Heart right ventricle (tissue), 16 donors: ENCODE measurements at regions of chr1 and their contacts with region 1.

Region 1: GRCh38 chr1:7495962-7496361 is 275.1 kb upstream of the VAMP3 start:
- DNase-seq: no peak
- ATAC-seq: no peak
- H3K4me3 ChIP-seq: no peak overlapping the region
- H3K27ac ChIP-seq: no peak overlapping the region
- H3K4me1 ChIP-seq: peaks cover 0 to 13% (median 7%) of the 10 kb centered on the region in 9 donors
- H3K27me3 ChIP-seq: peaks cover 0 to 3% (median 0%) of the 10 kb centered on the region in 7 donors
- CTCF ChIP-seq: no peak

Region 2: GRCh38 chr1:6307099-6307498 is 1188.9 kb before region 1 on chr1:
- intact Hi-C with region 1: loop called in 1 of 10 experiments (anchors 5 kb)
- DNase-seq: no peak
- ATAC-seq: peak in 1 of 8 donors; percentile 69
- H3K4me3 ChIP-seq: no peak overlapping the region
- H3K27ac ChIP-seq: no peak overlapping the region
- H3K4me1 ChIP-seq: peaks cover 0 to 5% (median 0%) of the 10 kb centered on the region in 9 donors
- H3K27me3 ChIP-seq: no peaks in the 10 kb centered on the region
- CTCF ChIP-seq: no peak

Region 3: GRCh38 chr1:7060745-7061144 is 435.2 kb before region 1 on chr1:
- intact Hi-C with region 1: loop called in 1 of 10 experiments (anchors 5 kb)
- DNase-seq: no peak
- ATAC-seq: no peak
- H3K4me3 ChIP-seq: no peak overlapping the region
- H3K27ac ChIP-seq: no peak overlapping the region
- H3K4me1 ChIP-seq: no peaks in the 10 kb centered on the region
- H3K27me3 ChIP-seq: peaks cover 0 to 6% (median 0%) of the 10 kb centered on the region in 7 donors
- CTCF ChIP-seq: no peak